GM10248 (cell line): ENCODE measurements at regions of chr3 and their contacts with region 1.

Region 1: DNA sequence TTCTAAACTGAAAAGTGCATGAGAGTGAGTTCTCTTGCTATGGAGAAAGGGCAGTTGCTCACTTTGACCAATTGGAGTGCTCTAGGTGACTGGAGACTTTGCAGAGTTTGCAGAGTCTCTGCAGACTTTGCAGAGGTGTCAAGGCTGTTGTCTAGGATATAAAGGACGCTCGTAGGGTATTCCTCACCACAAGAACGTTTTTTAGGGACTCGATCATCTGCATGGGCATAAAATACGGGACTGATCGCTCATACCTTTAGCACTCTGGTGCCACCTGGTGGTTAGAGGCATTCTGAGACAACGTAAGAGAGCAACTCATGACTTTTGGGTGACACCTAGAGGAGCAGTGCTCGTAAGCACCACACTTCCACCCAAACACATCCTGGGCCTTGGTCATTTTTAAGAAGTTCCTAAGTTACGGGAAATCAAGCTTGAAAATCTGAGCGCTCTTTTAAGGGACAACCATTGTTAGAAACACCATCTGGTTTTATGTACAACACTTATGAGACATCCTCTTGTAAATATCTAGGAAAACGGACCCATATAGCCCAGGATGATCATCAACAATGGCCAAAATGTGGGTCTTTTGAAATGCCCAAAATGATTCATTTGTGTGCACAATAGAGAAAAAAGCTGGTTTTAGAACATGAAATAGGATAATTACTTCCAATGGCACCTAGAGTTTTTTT is 51.6 kb upstream of the XCR1 start:
- DNase-seq: peak; percentile 72
- CTCF ChIP-seq: peak; percentile 98

Region 2: GRCh38 chr3:45043728-45044299 is 1035.0 kb before region 1 on chr3:
- CTCF ChIA-PET with region 1: interaction called, 11 read pairs
- POLR2A ChIA-PET with region 1: no interaction called
- DNase-seq: no peak
- CTCF ChIP-seq: no peak

Region 3: DNA sequence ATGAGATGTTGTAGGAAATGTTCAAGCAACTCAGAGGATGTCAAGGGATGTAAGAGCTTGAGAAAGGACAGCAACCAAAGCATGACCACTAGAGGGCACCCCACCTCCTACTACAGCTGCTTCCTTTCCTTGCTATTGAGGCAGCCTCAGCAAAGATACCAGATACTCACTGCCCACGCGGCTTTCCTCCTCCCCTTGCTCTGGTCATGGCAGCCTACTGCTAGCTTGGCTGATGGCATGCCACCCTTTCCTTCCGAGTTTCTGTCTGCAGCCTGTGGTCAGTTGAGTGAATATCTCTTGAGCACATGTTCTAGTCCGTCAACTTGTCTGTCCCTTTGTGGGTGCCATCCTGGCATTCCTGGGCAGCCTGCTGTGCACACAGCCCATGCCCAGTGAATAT is 140.0 kb before region 1 on chr3:
- CTCF ChIA-PET with region 1: interaction called, 377 read pairs
- POLR2A ChIA-PET with region 1: interaction called, 3 read pairs
- DNase-seq: peak; percentile 79
- CTCF ChIP-seq: peak; percentile 82

Region 4: DNA sequence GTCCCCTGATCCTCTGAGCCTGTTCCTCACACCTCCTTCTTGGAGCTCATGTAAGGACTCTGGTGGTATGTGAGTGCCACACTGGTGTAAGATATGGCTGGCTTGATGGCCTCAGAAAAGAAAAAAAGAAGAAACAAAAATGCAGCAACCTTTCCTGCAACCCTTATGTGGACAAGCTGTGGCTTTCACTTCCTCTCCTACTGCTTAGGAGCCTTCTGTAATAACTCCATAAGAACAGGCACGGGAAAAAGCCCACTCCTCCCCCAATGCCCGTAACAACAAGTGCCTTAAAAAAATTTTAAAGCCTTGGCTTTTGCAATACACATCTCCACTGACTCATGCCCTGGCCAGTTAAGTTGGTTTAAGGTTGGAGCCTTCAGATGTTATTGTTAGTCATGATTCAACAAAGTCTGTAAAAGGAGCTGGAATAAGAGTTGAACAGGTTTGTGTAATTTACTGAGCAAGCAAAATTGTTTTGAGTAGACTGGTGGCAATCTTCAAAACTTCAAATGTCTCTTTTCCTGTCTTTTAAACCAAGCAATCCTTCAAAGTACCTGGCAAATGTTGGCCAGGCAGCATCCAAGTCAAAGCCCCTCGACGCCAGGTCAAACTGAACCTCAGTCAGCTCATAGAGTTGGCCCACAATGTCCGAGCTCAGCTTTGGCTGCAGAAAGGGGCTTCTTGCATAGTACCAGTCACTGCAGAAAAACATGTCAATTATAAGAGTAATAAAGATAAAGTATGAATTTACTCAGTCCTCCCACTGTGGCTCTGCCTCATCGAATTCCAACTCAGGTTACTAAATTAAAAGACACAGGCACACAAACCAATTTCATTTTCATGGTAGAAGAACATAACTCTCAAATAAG is 106.1 kb before region 1 on chr3:
- CTCF ChIA-PET with region 1: interaction called, 106 read pairs
- POLR2A ChIA-PET with region 1: no interaction called
- DNase-seq: no peak
- CTCF ChIP-seq: no peak

Region 5: GRCh38 chr3:46010519-46011113 is 68.2 kb before region 1 on chr3:
- CTCF ChIA-PET with region 1: interaction called, 16 read pairs
- POLR2A ChIA-PET with region 1: no interaction called
- DNase-seq: no peak
- CTCF ChIP-seq: no peak

Region 6: DNA sequence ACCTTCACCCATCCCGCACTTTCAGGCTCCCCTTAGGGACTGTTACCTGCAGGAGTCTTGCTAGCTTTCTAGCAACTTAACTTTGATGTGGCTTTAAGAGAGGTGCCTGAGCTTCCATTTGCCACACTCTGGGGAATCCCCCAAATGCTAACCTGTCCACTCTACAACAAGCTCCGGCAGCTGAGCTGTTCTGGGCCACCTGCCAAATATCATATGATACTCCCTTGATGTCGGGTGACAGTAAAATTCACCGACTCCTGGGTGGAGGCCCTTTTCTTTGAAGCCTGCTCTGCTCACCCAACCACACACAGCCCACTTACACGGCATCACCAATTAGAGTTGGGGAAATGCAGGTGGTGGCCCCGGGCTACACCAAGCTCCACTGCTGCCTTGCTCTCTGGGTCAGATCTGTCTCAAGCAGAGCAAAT is 13.5 kb before region 1 on chr3:
- CTCF ChIA-PET with region 1: interaction called, 174 read pairs
- POLR2A ChIA-PET with region 1: no interaction called
- DNase-seq: peak; percentile 57
- CTCF ChIP-seq: no peak